HCT116 (cell line): ENCODE measurements at regions of chr2 and their contacts with region 1.

Region 1: DNA sequence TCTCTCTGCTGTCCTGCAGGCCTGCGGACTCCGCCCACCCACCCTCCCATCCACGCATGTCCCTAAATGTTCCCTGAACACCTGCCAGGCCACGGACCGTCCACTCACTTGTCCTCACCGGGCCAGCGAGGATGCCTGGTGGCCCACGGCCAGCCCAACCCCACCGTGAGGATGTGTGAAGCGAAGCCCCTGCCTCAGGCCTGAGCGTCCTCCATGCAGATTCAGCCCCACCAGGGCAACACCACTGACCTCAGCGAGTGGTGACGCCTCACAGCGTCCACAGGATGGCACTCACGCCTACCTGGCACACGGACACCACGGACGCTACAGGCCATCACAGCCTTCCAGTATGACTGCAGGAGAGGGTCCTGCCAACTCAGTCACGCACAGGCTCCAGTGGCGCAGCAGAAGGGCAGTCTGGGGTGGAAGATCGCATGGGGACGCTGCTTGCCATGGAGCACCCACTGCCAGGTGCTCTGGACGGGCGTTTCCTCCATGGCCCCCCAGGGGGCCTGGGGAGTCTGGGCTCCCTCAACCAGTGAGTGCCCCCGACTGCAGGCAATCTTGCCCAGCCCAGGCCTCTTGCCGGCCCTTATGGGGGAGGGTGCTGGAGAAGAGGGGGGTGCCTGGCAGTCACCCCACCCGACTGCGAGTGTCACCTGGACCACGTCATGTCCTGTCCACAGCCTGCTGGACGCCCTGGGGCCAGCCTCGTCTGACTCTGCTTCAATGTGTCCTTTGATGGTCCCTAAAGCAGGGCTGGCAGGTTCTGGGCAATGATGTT is 25.4 kb downstream of the HDAC4 start:
- DNase-seq: no peak
- ATAC-seq: peak; percentile 74
- H3K4me3 ChIP-seq: no peak overlapping the region
- H3K27ac ChIP-seq: no peak overlapping the region
- H3K4me1 ChIP-seq: no peaks in the 10 kb centered on the region
- H3K27me3 ChIP-seq: no peaks in the 10 kb centered on the region
- CTCF ChIP-seq: peak; percentile 21 to 39 (median 38); a peak in 5 of 6 replicates
- POLR2A ChIP-seq: no peak
- RAD21 ChIP-seq: peak; percentile 56

Region 2: DNA sequence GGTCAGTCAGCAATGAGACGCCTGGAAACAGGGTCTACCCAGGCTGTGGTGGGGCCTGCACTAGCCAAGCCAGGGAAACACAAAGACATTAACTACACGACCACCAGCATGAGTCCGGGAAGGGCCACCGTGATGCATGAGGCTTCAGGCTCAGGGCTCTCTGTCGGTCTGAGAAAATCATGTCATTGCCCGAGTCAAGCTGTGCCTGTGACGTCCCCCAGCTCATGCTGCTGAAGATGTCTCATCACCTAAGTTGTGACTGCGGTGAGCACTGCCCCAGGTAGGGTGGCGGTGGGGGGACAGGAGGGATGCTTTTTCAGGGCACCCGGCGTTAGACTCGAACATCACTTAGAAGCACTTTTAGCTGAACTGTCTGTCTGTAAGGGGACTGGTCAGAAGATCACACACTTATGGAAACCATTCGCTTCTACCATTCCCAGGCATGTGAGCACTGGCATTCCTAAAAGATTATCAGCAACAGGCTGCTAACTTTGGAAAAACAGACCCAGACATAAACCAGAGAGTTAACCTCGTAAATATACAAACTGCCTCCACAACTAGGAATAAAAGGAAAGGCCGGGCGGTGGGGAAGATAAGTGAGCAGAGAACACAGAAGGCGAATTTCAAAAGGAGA is 209.2 kb before region 1 on chr2:
- CTCF ChIA-PET with region 1: no interaction called
- POLR2A ChIA-PET with region 1: no interaction called
- RAD21 ChIA-PET with region 1: no interaction called
- intact Hi-C with region 1: no loop called
- DNase-seq: no peak
- ATAC-seq: no peak
- H3K4me3 ChIP-seq: no peak overlapping the region
- H3K27ac ChIP-seq: no peak overlapping the region
- H3K4me1 ChIP-seq: no peaks in the 10 kb centered on the region
- H3K27me3 ChIP-seq: no peaks in the 10 kb centered on the region
- CTCF ChIP-seq: no peak
- POLR2A ChIP-seq: no peak
- RAD21 ChIP-seq: no peak

Region 3: DNA sequence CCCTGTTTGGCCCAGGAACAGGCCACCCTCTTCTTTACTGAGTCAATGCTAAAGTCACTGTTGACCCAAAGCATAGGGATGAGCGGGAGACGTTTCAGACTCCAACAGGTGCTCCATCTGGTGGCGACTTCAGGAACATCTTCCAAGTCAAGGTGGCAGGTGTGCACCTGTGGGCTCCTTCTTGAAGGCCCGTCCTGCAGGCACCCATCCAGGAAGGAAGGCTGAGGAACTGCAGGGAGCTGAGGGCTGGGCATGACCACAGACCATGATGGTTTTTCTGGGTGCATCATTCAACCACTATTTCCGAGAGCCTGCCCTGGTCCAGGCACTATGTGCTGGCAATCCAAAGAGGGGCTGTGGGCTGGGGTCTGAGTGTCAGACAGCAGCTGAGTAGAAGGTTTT is 506.9 kb after region 1 on chr2:
- CTCF ChIA-PET with region 1: no interaction called
- POLR2A ChIA-PET with region 1: no interaction called
- RAD21 ChIA-PET with region 1: no interaction called
- intact Hi-C with region 1: loop called (anchors 5 kb)
- DNase-seq: peak; percentile 55
- ATAC-seq: peak; percentile 97
- H3K4me3 ChIP-seq: no peak overlapping the region
- H3K27ac ChIP-seq: no peak overlapping the region
- H3K4me1 ChIP-seq: no peaks in the 10 kb centered on the region
- H3K27me3 ChIP-seq: no peaks in the 10 kb centered on the region
- CTCF ChIP-seq: peak; percentile 57 to 77 (median 72); a peak in 5 of 6 replicates
- POLR2A ChIP-seq: no peak
- RAD21 ChIP-seq: peak; percentile 77